Prostate gland (tissue), 2 donors: ENCODE measurements at regions of chr6 and their contacts with region 1.

Region 1: DNA sequence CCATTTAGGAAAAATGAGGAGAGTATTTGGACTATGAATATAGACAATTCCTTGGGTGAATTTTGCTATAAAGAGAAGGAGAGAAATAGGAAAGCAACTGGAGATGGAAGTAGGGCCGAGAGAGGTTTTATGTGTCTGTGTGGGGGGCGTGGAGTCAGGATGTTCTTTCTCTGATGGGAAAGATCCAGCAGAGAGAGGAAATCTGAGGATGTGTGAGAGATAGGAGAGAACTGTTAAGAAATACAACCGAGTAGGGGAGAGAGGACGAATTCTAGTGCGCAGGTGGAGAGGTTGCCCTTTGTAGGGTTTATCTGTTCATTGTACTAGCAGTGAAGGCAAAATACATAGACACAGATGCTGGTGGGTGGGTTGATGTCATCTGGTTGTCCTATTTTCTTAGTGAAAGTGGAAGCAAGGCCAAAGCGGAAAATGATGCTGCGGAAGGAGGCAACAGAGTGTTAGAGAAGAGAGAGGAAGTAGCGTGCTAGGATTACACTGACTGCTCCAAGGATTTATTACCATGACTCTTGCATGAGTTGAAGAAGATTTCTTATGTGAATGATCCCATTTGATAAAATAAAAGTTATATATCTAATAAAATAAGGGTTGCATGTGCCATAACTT is 57.7 kb downstream of the CLVS2 start:
- DNase-seq: no peak
- H3K4me3 ChIP-seq: no peak overlapping the region
- H3K27ac ChIP-seq: no peak overlapping the region
- H3K4me1 ChIP-seq: no peaks in the 10 kb centered on the region
- H3K27me3 ChIP-seq: no peaks in the 10 kb centered on the region
- CTCF ChIP-seq: no peak
- POLR2A ChIP-seq: no peak

Region 2: GRCh38 chr6:122995921-122996793 is 57.6 kb before region 1 on chr6 and contains the start of gene CLVS2:
- intact Hi-C with region 1: loop called (anchors 10 kb)
- DNase-seq: peak; percentile 52
- H3K4me3 ChIP-seq: peak within 1 kb of the TSS; percentile 29 to 34
- H3K27ac ChIP-seq: peak within 1 kb of the TSS; percentile 46 to 60
- H3K4me1 ChIP-seq: no peaks in the 10 kb centered on the region
- H3K27me3 ChIP-seq: no peaks in the 10 kb centered on the region
- CTCF ChIP-seq: no peak
- POLR2A ChIP-seq: peak; percentile 50
- total RNA-seq, gene CLVS2: 3.0 to 4.2 TPM

Region 3: GRCh38 chr6:123091091-123091895 is 37.6 kb after region 1 on chr6:
- intact Hi-C with region 1: loop called (anchors 5 kb)
- DNase-seq: peak; percentile 78
- H3K4me3 ChIP-seq: no peak overlapping the region
- H3K27ac ChIP-seq: peak overlapping the region; percentile 64 to 74
- H3K4me1 ChIP-seq: no peaks in the 10 kb centered on the region
- H3K27me3 ChIP-seq: no peaks in the 10 kb centered on the region
- CTCF ChIP-seq: no peak
- POLR2A ChIP-seq: no peak